GM10248 (cell line): ENCODE measurements at regions of chr14 and their contacts with region 1.

Region 1: GRCh38 chr14:60331201-60332045 is 82.4 kb downstream of the PPM1A start:
- DNase-seq: peak; percentile 71
- CTCF ChIP-seq: peak; percentile 82

Region 2: DNA sequence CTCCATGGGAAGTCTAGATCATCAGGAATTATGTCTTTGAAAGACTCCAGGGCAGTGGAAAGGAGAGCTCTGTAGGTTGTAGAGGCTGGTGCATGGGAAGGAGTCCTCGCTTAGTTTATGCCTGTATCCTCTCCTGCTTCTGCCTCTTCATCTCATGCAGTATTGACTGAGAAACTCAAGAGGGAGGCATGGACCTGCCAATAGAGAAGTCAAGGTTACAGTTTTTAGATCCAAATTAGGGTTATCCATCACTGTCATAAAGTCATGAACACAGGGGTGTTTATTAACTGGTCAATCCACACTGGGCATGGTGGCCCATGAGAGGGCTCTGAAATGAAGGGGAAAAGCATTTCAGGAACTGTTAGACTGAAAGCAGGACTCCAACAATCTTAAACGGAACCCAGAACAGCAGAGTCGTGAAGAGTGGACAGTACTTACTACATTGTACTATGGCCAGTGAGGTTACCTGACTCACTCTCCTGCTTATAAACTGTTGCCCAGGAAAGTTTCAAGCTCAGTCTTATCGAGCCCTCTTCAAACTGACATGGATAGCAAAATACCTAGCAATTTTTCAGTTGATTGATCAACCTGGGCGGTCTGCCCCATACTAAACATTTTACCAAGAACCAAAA is 136.1 kb before region 1 on chr14:
- CTCF ChIA-PET with region 1: interaction called, 34 read pairs
- POLR2A ChIA-PET with region 1: no interaction called
- DNase-seq: no peak
- CTCF ChIP-seq: peak; percentile 56

Region 3: DNA sequence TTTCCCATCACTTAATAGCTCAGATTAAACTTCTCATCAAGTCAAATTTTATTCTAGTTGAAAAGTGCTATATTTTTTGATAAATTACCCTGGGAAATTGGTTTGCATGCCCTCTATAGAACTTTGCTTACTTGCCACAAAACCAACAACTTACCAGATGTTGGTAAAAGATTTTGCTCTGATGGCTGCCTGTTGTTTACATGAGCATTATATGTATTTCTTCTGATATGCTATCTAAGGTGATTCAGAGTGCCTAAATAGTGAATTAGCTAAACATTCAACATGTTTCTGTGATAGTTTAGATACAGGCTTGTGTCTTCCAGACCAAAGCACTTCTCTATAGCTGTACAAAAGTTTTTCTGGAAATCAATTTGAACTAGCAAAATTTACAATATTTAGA is 31.4 kb before region 1 on chr14:
- CTCF ChIA-PET with region 1: interaction called, 20 read pairs
- POLR2A ChIA-PET with region 1: no interaction called
- DNase-seq: no peak
- CTCF ChIP-seq: no peak

Region 4: GRCh38 chr14:60317609-60318008 is 13.8 kb before region 1 on chr14:
- CTCF ChIA-PET with region 1: interaction called, 18 read pairs
- POLR2A ChIA-PET with region 1: no interaction called
- DNase-seq: no peak
- CTCF ChIP-seq: no peak

Region 5: DNA sequence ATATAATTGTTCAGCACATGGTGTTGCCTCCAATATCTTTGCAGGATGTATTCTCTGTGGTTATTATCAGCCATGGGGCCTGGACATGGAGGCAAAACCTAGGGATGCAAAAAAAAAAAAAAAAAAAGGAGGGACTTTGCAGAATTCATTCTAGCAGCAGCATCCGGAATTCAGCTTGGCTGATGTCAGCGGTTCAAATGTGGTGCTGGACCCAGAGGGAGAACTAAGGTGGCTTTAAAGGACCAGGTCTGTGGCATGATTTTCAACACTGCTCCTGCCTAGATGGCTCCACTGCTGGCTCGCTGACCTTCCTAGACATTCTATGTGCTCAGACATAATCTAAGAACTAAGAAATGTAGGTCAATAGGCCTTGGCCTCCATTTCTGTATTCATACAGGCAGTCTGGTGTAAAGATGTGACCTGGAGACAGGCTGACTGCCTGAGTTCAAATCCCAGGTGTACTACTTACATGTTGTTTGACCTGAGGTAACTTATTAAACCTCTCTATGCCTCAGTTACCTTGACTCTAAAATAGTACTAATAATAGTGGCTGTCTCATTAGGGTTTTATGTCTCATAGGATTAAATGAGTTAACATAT is 26.2 kb after region 1 on chr14:
- CTCF ChIA-PET with region 1: interaction called, 14 read pairs
- POLR2A ChIA-PET with region 1: no interaction called
- DNase-seq: no peak
- CTCF ChIP-seq: no peak